PC-9 (cell line): ENCODE measurements at regions of chr3 and their contacts with region 1.

Region 1: GRCh38 chr3:53144862-53145712 is 14.9 kb upstream of the RFT1 start:
- DNase-seq: peak; percentile 59 to 79
- H3K4me3 ChIP-seq: no peak overlapping the region
- H3K27ac ChIP-seq: peak overlapping the region; percentile 56
- H3K4me1 ChIP-seq: peaks cover 68% of the 10 kb centered on the region
- H3K27me3 ChIP-seq: no peaks in the 10 kb centered on the region
- CTCF ChIP-seq: no peak

Region 2: GRCh38 chr3:52705688-52706686 is 439.1 kb before region 1 on chr3 and contains the starts of genes GLT8D1 and SPCS1:
- CTCF ChIA-PET with region 1: no interaction called
- POLR2A ChIA-PET with region 1: no interaction called
- intact Hi-C with region 1: no loop called
- DNase-seq: peak; percentile 69 to 82
- H3K4me3 ChIP-seq: peak within 1 kb of the TSS; percentile 86
- H3K27ac ChIP-seq: 0 out of 2 replicates have a peak within 1 kb of the TSS, but pooled peaks have one; percentile 7
- H3K4me1 ChIP-seq: peaks cover 22% of the 10 kb centered on the region
- H3K27me3 ChIP-seq: no peaks in the 10 kb centered on the region
- CTCF ChIP-seq: no peak
- total RNA-seq, gene GLT8D1: 42.1 and 48.6 TPM in 2 replicates
- total RNA-seq, gene SPCS1: 91.9 and 104 TPM in 2 replicates

Region 3: DNA sequence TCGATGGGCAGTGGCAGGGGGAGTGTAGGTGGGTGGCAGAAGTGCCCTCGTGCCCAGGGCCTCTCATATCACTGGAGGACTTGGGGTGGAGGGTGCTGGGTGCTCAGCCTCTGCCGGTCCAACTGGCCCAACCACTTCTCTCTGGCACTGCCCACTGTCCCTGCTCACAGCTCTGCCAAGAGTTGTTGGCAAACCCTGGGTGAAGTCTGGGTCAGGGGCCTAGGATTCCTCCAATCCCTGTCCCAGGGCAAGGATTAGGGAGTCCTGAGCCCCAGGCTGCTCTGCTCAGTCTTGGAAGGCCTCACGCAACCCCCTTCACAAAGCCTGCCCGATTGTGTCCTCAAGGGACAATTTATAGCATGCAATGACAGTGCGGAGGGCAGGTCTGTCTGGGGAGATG is 10.7 kb after region 1 on chr3:
- CTCF ChIA-PET with region 1: no interaction called
- POLR2A ChIA-PET with region 1: interaction called, 4 read pairs
- intact Hi-C with region 1: loop called (anchors 1 kb)
- DNase-seq: peak; percentile 90 to 91
- H3K4me3 ChIP-seq: peak overlapping the region; percentile 39; the same call in 1 of the 2 replicates
- H3K27ac ChIP-seq: peak overlapping the region; percentile 82
- H3K4me1 ChIP-seq: peaks cover 97% of the 10 kb centered on the region
- H3K27me3 ChIP-seq: no peaks in the 10 kb centered on the region
- CTCF ChIP-seq: no peak